Head of caudate nucleus (tissue), 42 donors: ENCODE measurements at regions of chr4 and their contacts with region 1.

Region 1: GRCh38 chr4:77240469-77241066 is 83.6 kb downstream of the CCNG2 start:
- DNase-seq: peak; percentile 25 to 88 (median 63)

Region 2: GRCh38 chr4:77358315-77358928 is 117.9 kb after region 1 on chr4:
- intact Hi-C with region 1: loop called (anchors 10 kb)
- DNase-seq: peak in 21 of 42 donors; percentile 4 to 67 (median 26)